Dorsolateral prefrontal cortex (tissue), 120 donors: ENCODE measurements at regions of chr7 and their contacts with region 1.

Region 1: DNA sequence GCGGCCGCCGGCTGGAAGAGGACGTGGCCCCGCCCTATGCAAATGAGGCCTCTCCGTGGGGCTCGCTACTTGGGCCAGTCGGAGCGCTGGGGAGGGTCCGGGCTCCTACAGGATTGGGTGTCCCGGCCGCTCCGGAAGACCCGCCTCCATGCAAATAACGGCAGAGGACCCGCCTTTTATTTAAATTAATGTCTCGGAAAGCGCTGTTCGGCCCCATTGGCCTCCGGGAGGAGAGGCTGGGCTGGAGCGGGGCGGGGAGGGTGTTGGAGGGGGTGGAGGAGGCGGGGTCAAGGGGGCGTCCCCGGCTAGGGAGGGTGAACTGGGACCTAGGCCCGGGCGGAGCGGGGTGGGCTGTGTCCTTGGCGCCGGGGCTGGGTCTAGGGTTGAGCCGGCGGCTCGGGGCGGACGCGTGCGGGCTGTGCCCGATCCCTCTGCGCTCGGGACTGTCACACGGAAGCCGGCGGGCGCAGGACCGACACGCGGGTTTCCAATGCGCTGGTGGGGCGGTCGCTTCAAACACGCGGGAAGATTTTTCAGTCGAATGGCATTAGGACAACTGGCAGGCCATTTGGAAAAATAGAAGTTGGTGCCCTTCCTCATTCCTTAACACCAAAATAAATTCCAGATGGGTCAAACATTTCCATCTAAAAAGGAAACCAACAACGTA is 344 bp upstream of the POLM start:
- DNase-seq: peak; percentile 96 to 100 (median 99)
- H3K4me3 ChIP-seq: peak overlapping the region; percentile 58 to 98 (median 89)
- H3K27ac ChIP-seq: peak overlapping the region in 57 of 59 donors; percentile 28 to 97 (median 87)
- H3K27me3 ChIP-seq: no peaks in the 10 kb centered on the region
- CTCF ChIP-seq: peak in 23 of 56 donors; percentile 7 to 55 (median 35)

Region 2: GRCh38 chr7:44044315-44045225 is 38.1 kb before region 1 on chr7 and contains the start of gene DBNL:
- intact Hi-C with region 1: loop called in 1 of 2 experiments (anchors 2 kb)
- DNase-seq: peak; percentile 94 to 99 (median 96)
- H3K4me3 ChIP-seq: peak within 1 kb of the TSS; percentile 68 to 98 (median 92)
- H3K27ac ChIP-seq: peak within 1 kb of the TSS; percentile 46 to 95 (median 86)
- H3K27me3 ChIP-seq: no peaks in the 10 kb centered on the region
- CTCF ChIP-seq: peak in 27 of 56 donors; percentile 5 to 49 (median 26)
- total RNA-seq, gene DBNL: 58.1 to 115 (median 89.4) TPM

Region 3: DNA sequence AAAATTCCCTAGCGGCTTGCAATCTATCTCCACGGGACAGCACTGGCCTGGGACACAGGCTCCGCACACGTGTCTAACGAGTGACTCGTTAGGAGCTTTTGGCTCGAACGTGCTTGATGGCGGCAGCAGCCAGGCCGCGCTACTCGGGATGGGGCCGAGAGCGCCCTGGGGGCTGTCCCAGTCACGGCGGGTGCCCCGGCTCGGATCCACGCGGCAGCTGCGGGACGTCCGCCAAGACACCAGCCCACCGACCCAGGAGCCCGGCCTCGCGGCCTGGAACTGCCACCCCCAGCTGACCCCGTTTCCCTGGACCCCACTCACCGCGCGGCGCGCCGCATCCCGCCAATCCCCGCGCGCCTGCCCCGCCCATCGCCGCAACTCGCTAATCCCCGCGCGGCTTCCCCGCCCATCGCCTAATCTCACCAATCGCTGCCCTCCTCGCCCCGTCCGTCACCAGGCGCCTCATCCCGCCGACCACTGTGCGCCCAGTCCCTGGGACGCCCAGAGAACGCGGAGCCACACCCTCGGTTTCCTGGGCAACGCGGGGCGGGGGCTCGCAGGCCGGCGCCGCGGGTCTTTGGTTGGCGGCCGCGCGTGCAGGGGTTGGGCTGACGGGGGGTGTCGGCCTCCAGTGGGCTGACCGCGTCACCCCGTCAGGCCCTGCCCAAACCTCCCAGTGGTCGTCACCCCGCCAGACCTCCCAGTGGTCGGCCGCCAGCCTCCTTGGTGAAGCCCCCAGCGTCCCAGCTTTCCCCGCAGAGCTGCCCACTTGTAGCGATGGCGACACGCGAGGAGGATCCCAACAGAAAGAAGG is 40.7 kb after region 1 on chr7 and contains the start of gene POLD2:
- intact Hi-C with region 1: loop called in 1 of 2 experiments (anchors 5 kb)
- DNase-seq: peak; percentile 93 to 99 (median 98)
- H3K4me3 ChIP-seq: peak within 1 kb of the TSS; percentile 67 to 95 (median 86)
- H3K27ac ChIP-seq: peak within 1 kb of the TSS in 56 of 59 donors; percentile 1 to 90 (median 76)
- H3K27me3 ChIP-seq: no peaks in the 10 kb centered on the region
- CTCF ChIP-seq: peak in 25 of 56 donors; percentile 6 to 55 (median 22)
- total RNA-seq, gene POLD2: 33.8 to 83.9 (median 57.8) TPM

Region 4: GRCh38 chr7:44196450-44196872 is 113.8 kb after region 1 on chr7:
- intact Hi-C with region 1: loop called in 1 of 2 experiments (anchors 5 kb)
- DNase-seq: peak in 2 of 10 donors; percentile 54 to 65
- H3K4me3 ChIP-seq: no peak overlapping the region
- H3K27ac ChIP-seq: peak overlapping the region in 1 of 59 donors; percentile 28
- H3K27me3 ChIP-seq: peaks cover 0 to 6% (median 0%) of the 10 kb centered on the region in 45 donors
- CTCF ChIP-seq: peak in 54 of 56 donors; percentile 39 to 77 (median 67)